ENCODE measurements at regions of chr12 and their contacts with region 1.

Region 1: GRCh38 chr12:88052686-88053085 is 23.5 kb upstream of the C12orf50 start:
- DNase-seq: peak; percentile 30
- ATAC-seq: peak; percentile 95
- H3K4me3 ChIP-seq: no peak overlapping the region
- H3K27ac ChIP-seq: no peak overlapping the region
- H3K4me1 ChIP-seq: no peaks in the 10 kb centered on the region
- H3K27me3 ChIP-seq: no peaks in the 10 kb centered on the region
- CTCF ChIP-seq: peak; percentile 68
- EP300 ChIP-seq: no peak
- POLR2A ChIP-seq: no peak
- RAD21 ChIP-seq: no peak

Region 2: GRCh38 chr12:87866578-87867292 is 186.0 kb before region 1 on chr12:
- CTCF ChIA-PET with region 1: no interaction called
- POLR2A ChIA-PET with region 1: no interaction called
- in situ Hi-C with region 1: no loop called
- intact Hi-C with region 1: loop called (anchors 2 kb)
- DNase-seq: peak; percentile 14
- ATAC-seq: peak; percentile 68
- H3K4me3 ChIP-seq: no peak overlapping the region
- H3K27ac ChIP-seq: no peak overlapping the region
- H3K4me1 ChIP-seq: no peaks in the 10 kb centered on the region
- H3K27me3 ChIP-seq: no peaks in the 10 kb centered on the region
- CTCF ChIP-seq: peak; percentile 42
- EP300 ChIP-seq: no peak
- POLR2A ChIP-seq: no peak
- RAD21 ChIP-seq: no peak

Measured in HepG2 (cell line).